Panc1 (cell line): ENCODE measurements at regions of chr13 and their contacts with region 1.

Region 1: DNA sequence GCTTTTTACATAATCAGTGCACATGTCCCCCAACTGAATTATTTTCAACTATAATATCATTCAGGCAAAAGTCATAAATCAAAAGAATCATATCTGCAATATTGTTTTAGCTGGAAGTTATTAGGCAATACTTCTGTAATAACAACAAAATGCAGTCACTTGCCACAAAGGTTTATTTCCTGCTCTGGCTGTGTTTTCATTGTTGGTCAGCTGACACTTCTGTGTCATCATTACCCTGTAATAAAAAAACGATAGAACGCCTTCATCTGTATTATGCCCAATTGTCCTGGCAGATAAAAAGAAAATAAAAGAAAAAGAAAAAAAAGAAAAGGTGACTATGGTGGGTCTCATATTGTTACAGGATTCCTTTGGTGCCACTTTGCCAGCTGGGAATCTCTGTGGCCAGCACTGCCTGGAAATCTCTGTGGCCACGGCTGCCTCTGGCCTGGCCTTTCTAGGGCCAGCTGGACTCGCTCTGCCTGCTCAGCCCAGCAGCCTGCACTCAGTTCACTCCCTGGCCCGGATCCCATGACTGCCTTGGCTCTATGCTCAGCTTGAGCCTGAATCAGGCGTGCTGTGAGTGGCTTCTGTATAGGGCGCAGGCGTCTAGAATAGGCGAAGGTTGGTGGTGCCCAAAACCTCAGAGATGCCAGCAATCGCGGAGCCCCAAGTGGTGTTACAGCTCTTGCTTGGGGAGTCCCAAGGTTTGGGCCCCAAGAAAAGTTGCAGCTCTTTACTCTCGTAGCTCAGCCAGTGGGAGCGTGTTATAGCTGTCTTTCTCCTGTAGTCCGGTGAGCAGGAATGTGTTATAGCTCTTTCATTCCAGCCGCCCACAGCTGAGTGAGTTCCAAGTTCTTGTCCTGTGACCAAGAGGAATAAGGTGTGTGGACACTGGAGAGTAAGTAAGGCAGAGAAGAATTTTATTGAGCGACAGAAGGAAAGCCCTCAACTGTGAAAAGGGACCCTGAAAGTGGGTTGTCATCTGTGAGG is 1227.1 kb downstream of the SLITRK1 start:
- DNase-seq: no peak
- ATAC-seq: no peak
- H3K4me3 ChIP-seq: no peak overlapping the region
- H3K27ac ChIP-seq: no peak overlapping the region
- H3K4me1 ChIP-seq: no peaks in the 10 kb centered on the region
- H3K27me3 ChIP-seq: no peaks in the 10 kb centered on the region
- CTCF ChIP-seq: no peak

Region 2: GRCh38 chr13:82772816-82773215 is 117.7 kb after region 1 on chr13:
- CTCF ChIA-PET with region 1: no interaction called
- POLR2A ChIA-PET with region 1: no interaction called
- in situ Hi-C with region 1: no loop called
- intact Hi-C with region 1: loop called (anchors 5 kb)
- DNase-seq: no peak
- ATAC-seq: no peak
- H3K4me3 ChIP-seq: no peak overlapping the region
- H3K27ac ChIP-seq: no peak overlapping the region
- H3K4me1 ChIP-seq: no peaks in the 10 kb centered on the region
- H3K27me3 ChIP-seq: no peaks in the 10 kb centered on the region
- CTCF ChIP-seq: no peak